Naive thymus-derived CD4-positive, alpha-beta T cell (primary cell): ENCODE measurements at regions of chr4 and their contacts with region 1.

Region 1: GRCh38 chr4:6269616-6270511 is at the start of gene WFS1:
- DNase-seq: peak; percentile 91 to 97 (median 95)
- ATAC-seq: peak; percentile 100
- H3K4me3 ChIP-seq: peak within 1 kb of the TSS; percentile 82
- H3K4me3 Mint-ChIP-seq: peak within 1 kb of the TSS; percentile 85 to 92 (median 90)
- H3K27ac ChIP-seq: peak within 1 kb of the TSS; percentile 67
- H3K27ac Mint-ChIP-seq: peak within 1 kb of the TSS; percentile 24 to 84 (median 65)
- H3K4me1 ChIP-seq: peaks cover 8% of the 10 kb centered on the region in 2 donors
- H3K4me1 Mint-ChIP-seq: peaks cover 19 to 31% (median 25%) of the 10 kb centered on the region in 7 donors
- H3K27me3 ChIP-seq: no peaks in the 10 kb centered on the region
- H3K27me3 Mint-ChIP-seq: peaks cover 0 to 44% (median 3%) of the 10 kb centered on the region in 5 donors
- total RNA-seq, gene WFS1: 2.8 to 6.7 (median 4.4) TPM

Region 2: GRCh38 chr4:4606321-4606720 is 1663.5 kb before region 1 on chr4:
- CTCF ChIA-PET with region 1: no interaction called
- POLR2A ChIA-PET with region 1: no interaction called
- intact Hi-C with region 1: no loop called
- DNase-seq: no peak
- ATAC-seq: no peak
- H3K4me3 ChIP-seq: no peak overlapping the region
- H3K4me3 Mint-ChIP-seq: no peak overlapping the region
- H3K27ac ChIP-seq: no peak overlapping the region
- H3K27ac Mint-ChIP-seq: no peak overlapping the region
- H3K4me1 ChIP-seq: no peaks in the 10 kb centered on the region
- H3K4me1 Mint-ChIP-seq: peaks cover 0 to 3% (median 0%) of the 10 kb centered on the region in 7 donors
- H3K27me3 ChIP-seq: no peaks in the 10 kb centered on the region
- H3K27me3 Mint-ChIP-seq: no peaks in the 10 kb centered on the region

Region 3: DNA sequence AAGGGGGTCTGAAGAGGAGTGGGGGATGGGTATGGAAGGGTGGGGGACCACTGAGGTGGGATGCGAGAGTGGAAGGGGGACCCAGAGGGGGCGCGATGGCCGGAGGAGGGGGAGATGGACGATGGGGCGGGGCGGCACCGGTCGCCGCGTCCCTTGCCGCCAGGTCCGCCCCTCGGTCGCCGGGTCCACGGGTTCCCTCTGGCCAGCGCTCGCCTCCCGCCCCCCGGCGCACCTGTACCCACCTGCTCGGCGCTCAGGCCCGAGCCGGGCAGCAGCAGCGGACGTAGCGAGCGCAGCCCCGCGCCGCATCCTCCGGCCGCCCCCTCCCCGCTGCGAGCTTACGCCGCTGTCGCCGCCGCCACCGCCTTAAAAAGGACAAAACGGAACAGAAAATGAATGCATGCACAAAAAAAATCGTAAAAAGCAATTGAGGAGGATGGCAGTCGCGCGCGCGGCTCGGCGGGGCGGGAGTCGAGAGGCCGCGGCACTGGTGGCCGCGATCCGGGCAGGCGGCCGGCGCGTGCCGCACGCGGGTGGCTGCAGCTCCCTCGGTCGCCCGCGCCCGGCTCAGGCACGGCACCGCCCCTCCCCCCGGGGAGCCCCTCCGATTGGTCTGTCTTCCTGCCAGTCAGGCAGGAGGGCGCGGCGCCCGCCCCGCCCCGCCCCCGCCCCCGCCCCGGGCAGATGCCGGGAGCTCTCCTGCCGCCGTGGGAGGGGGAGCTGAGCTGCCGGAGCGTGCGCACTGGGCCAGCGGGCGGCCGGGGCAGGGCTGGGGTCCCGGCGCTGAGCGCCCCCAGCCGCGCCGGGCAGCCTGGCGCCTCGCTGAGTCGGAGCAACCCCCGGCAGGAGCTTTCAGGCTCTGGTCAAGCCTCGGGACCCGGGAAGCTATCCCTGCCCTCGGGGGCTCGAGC is 69.6 kb before region 1 on chr4 and contains the start of gene JAKMIP1:
- CTCF ChIA-PET with region 1: no interaction called
- POLR2A ChIA-PET with region 1: no interaction called
- intact Hi-C with region 1: loop called in 1 of 2 experiments (anchors 5 kb)
- DNase-seq: peak; percentile 1 to 96 (median 43)
- ATAC-seq: peak; percentile 81
- H3K4me3 ChIP-seq: peak within 1 kb of the TSS; percentile 43
- H3K4me3 Mint-ChIP-seq: peak within 1 kb of the TSS; percentile 61 to 89 (median 76)
- H3K27ac ChIP-seq: no peak within 1 kb of the TSS
- H3K27ac Mint-ChIP-seq: peak within 1 kb of the TSS in 2 of 9 donors; percentile 71 to 73
- H3K4me1 ChIP-seq: peaks cover 8 to 30% of the 10 kb centered on the region in 2 donors
- H3K4me1 Mint-ChIP-seq: peaks cover 5 to 28% (median 17%) of the 10 kb centered on the region in 7 donors
- H3K27me3 ChIP-seq: peaks cover 0 to 6% of the 10 kb centered on the region in 2 donors
- H3K27me3 Mint-ChIP-seq: peaks cover 36 to 66% (median 45%) of the 10 kb centered on the region in 5 donors
- total RNA-seq, gene JAKMIP1: 0.66 to 15.3 (median 4.1) TPM in 3 of 5 experiments, not detected in the others

Region 4: DNA sequence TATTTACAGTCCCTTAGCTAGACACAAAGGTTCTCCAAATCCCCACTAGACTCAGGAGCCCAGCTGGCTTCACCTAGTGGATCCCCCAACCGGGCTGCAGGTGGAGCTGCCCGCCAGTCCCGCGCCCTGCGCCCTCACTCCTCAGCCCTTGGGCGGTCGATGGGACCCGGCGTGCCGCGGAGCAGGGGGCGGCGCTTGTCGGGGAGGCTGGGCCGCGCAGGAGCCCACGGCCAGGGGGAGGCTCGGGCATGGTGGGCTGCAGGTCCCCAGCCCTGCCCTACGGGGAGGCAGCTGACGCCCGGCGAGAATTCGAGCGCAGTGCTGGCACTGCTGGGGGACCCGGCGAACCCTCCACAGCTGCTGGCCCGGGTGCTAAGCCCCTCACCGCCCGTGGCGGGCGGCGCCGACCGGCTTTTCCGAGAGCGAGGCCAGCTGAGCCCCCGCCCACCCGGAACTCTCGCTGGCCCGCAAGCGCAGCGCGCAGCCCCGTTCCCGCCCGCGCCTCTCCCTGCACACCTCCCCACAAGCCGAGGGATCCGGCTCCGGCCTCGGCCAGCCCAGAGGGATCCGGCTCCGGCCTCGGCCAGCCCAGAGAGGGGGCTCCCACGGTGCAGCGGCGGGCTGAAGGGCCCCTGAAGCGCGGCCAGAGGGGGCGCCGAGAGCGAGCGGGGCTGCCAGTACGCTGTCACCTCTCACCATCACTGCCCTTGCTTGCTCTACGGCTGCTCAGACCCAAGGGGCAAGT is 39.2 kb after region 1 on chr4:
- CTCF ChIA-PET with region 1: no interaction called
- POLR2A ChIA-PET with region 1: no interaction called
- intact Hi-C with region 1: loop called in 1 of 2 experiments (anchors 5 kb)
- DNase-seq: peak in 2 of 9 donors; percentile 9 to 20
- ATAC-seq: peak; percentile 40
- H3K4me3 ChIP-seq: no peak overlapping the region
- H3K4me3 Mint-ChIP-seq: peak overlapping the region; percentile 8 to 78 (median 64)
- H3K27ac ChIP-seq: no peak overlapping the region
- H3K27ac Mint-ChIP-seq: no peak overlapping the region
- H3K4me1 ChIP-seq: no peaks in the 10 kb centered on the region
- H3K4me1 Mint-ChIP-seq: peaks cover 0 to 15% (median 8%) of the 10 kb centered on the region in 7 donors
- H3K27me3 ChIP-seq: no peaks in the 10 kb centered on the region
- H3K27me3 Mint-ChIP-seq: peaks cover 43 to 62% (median 52%) of the 10 kb centered on the region in 5 donors